ENCODE measurements at regions of chr14 and their contacts with region 1.

Region 1: GRCh38 chr14:81234278-81234677 is 13.5 kb upstream of the GTF2A1 start:
- DNase-seq: peak; percentile 39
- ATAC-seq: no peak
- H3K4me3 ChIP-seq: no peak overlapping the region
- H3K27ac ChIP-seq: no peak overlapping the region
- H3K4me1 ChIP-seq: peaks cover 7% of the 10 kb centered on the region
- H3K27me3 ChIP-seq: no peaks in the 10 kb centered on the region
- CTCF ChIP-seq: no peak

Region 2: GRCh38 chr14:81256289-81256960 is 22.1 kb after region 1 on chr14:
- CTCF ChIA-PET with region 1: no interaction called
- POLR2A ChIA-PET with region 1: no interaction called
- intact Hi-C with region 1: no loop called
- DNase-seq: no peak
- ATAC-seq: no peak
- H3K4me3 ChIP-seq: no peak overlapping the region
- H3K27ac ChIP-seq: no peak overlapping the region
- H3K4me1 ChIP-seq: no peaks in the 10 kb centered on the region
- H3K27me3 ChIP-seq: no peaks in the 10 kb centered on the region
- CTCF ChIP-seq: no peak

Region 3: DNA sequence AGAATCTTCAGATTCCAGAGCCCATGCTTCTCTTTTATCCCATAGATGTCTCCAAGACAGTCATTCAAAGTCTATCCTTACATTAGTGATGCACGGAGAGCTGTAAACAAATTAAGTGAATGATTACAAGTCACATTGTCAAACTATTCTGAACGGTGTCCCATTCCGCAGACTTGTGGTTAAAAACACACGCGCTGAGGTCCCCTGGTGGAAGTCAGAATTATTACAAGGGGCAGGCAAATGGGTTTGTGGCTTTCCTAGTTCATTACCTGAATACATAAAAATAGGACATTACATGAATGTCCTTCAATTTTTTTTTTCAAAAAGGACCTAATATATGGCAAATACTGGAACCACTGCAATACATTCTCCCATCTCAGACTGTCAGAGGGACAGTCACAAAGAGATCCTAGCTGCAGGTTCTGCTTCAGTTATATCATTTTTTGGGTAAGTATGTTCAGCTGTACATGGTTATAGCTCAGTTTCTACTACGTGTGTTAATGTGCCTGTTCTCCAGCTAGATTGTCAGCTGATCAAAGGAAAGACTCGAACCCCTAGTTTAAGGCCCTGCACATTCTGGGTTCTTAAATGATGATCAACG is 219.0 kb after region 1 on chr14:
- CTCF ChIA-PET with region 1: interaction called, 12 read pairs
- POLR2A ChIA-PET with region 1: no interaction called
- intact Hi-C with region 1: no loop called
- DNase-seq: peak; percentile 78
- ATAC-seq: peak; percentile 77
- H3K4me3 ChIP-seq: no peak overlapping the region
- H3K27ac ChIP-seq: no peak overlapping the region
- H3K4me1 ChIP-seq: no peaks in the 10 kb centered on the region
- H3K27me3 ChIP-seq: no peaks in the 10 kb centered on the region
- CTCF ChIP-seq: peak; percentile 92